ENCODE measurements at regions of chr1 and their contacts with region 1.

Region 1: DNA sequence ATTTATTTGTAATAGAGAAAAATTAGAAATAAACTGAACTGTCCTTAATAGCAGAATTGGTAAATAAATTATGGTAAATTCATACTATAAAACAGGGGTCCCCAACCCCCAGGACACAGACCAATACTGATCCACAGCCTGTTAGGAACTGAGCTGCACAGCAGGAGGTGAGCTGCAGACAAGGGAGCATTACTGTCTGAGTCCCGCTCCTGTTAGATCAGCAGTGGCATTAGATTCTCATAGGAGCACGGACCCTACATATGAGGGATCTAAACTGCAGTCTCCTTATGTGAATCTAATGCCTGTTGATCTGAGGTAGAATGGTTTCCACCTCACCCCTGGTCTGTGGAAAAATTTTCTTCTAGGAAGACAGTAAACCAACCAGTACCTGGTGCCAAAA is 7.5 kb downstream of the WDR47 start:
- DNase-seq: no peak
- ATAC-seq: no peak
- H3K4me3 ChIP-seq: no peak overlapping the region
- H3K27ac ChIP-seq: no peak overlapping the region
- H3K4me1 ChIP-seq: no peaks in the 10 kb centered on the region
- H3K27me3 ChIP-seq: no peaks in the 10 kb centered on the region

Region 2: GRCh38 chr1:109112652-109113285 is 78.4 kb after region 1 on chr1:
- intact Hi-C with region 1: loop called in 1 of 4 experiments (anchors 10 kb)
- DNase-seq: peak; percentile 95 to 98 (median 98)
- ATAC-seq: peak; percentile 95 to 98
- H3K4me3 ChIP-seq: peak overlapping the region; percentile 31
- H3K27ac ChIP-seq: no peak overlapping the region
- H3K4me1 ChIP-seq: peaks cover 3% of the 10 kb centered on the region
- H3K27me3 ChIP-seq: no peaks in the 10 kb centered on the region

Region 3: GRCh38 chr1:109137964-109138741 is 103.8 kb after region 1 on chr1:
- intact Hi-C with region 1: no loop called
- DNase-seq: no peak
- ATAC-seq: no peak
- H3K4me3 ChIP-seq: no peak overlapping the region
- H3K27ac ChIP-seq: no peak overlapping the region
- H3K4me1 ChIP-seq: peaks cover 5% of the 10 kb centered on the region
- H3K27me3 ChIP-seq: no peaks in the 10 kb centered on the region